Left ventricle myocardium superior (tissue), 1 donor: ENCODE measurements at regions of chr21 and their contacts with region 1.

Region 1: DNA sequence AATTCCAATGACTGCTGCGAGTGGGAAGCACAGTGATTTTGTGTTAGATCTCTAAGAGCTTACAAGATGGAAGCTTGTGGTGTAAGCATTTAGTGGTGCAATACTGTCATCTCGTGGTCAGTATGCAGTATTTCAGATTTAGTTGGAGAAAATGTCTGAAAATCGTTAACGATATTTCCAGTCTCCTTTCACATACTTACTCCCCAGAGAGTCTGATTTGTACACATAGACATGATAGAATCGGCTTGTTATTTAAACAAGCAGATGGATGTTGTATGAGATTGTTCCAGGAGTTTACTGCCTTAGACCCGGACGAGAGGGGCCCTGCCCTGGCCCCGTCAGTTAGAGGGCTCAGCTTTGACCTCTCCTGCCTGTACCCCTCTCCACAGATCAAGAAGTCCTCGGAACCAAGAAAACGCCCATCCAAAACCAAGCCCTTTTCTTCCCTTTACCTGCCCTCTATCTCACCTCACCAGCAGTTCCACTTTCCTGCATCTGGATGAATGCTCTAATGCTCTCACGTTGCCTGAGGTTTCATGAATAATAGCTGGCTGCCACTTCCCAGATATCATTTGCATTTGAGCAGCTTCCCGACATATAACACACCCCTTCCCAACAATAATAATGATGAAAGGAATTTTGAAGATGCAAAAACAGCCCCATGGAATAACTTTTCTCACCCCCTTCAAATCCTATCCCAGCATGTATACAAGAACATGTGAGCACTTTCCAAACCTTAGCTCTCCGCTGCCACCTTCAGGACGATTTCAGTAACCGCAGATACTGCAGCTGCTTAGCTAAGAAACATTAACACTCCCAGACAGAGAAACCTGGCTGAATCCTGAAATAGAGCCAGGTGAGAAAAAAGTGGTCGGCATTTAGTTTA is 247.3 kb downstream of the LTN1 start:
- DNase-seq: peak; percentile 59
- ATAC-seq: peak; percentile 91

Region 2: DNA sequence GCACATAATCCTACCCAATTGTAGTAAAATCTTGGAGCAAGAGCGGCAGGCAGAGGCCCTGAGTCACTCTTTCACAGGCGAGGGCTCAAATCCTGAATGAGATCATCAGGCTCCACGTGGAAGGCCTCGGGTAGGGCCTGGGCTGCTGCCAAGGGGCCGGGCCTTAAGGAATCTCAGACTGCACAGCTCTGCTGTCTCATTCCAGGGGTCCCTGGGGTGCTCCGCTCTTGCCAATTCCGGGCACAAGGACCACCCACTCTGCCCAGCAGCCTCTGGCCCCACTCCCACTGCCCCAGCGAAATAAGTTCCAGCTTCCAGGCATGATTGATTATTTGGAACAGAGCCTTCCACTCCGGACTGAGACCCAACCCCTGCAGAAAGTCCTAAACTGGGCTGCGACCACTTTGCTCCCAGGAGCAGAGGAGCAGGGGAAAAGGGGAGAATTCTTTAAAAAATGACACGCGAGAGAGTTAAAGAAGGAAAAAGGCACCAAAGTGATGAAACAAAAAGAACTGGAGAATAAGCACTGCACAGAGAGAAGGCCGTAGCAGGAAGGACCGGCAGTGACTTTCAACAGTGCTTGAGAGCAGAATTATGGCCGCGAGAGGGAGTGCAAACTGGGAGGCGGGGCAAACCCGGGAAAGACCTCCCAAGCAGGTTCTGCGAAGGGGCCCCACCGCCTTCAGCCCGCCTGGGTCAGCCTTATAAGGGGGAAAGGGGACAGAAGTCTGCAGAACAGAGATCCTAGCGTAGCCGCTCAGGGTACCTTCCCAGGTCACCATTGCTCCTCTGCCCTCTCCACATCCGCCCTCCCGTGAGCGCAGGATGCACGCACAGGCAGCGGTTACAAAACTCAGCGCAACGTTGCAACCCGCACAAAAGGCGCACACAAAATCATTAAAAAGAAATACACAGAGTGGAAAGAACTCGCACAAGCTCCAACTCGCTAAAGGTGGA is 1902.1 kb before region 1 on chr21:
- intact Hi-C with region 1: loop called (anchors 5 kb)
- DNase-seq: peak; percentile 96
- ATAC-seq: peak; percentile 59

Region 3: DNA sequence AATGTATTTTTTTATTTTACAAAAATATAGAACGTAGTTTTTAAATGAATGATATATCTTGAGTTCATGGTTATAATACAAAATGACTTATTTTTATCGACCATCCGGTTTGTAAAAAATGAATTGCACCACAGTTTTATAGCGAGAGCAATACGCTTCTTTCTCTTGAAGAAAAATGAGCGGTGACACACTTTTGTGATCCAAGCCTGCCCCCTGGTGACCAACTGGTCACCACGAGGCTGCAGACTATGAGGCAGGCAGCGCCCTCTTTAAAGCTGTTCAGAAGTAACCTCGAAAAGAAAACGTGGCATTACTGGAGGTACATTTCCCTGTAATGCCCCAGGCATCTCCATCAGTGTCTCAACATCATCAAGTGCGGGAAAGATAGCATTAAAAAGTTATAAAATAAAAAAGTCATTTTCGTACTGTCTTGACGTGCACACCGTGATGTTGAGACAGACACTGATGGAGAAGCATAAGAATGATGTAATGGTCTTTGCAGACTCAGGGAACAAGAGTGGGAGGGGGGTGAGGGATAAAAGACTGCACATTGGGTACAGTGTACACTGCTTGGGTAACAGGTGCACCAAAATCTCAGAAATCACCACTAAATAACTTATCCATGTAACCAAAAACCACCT is 1044.3 kb before region 1 on chr21:
- intact Hi-C with region 1: loop called (anchors 5 kb)
- DNase-seq: peak; percentile 87
- ATAC-seq: peak; percentile 92

Region 4: DNA sequence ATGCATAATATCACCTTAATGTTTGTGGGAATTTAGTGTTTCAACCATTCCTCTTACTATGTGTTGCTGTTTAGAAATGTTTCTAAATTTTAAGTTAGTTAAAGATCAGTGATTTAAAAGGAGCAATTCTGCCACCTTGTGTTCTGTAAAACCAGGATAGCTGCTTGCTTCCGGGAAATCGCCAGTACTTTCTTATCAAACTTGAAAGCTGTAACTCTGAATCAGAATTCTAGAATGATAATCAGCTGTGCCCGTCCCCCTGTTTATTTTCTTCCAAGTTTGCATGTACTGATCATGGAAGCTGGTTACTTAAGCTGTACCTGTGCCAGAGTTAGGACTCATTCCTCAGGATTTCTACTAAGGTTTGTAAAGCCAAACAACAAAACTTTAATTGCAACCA is 409.1 kb before region 1 on chr21:
- intact Hi-C with region 1: loop called (anchors 5 kb)
- DNase-seq: no peak
- ATAC-seq: peak; percentile 58

Region 5: DNA sequence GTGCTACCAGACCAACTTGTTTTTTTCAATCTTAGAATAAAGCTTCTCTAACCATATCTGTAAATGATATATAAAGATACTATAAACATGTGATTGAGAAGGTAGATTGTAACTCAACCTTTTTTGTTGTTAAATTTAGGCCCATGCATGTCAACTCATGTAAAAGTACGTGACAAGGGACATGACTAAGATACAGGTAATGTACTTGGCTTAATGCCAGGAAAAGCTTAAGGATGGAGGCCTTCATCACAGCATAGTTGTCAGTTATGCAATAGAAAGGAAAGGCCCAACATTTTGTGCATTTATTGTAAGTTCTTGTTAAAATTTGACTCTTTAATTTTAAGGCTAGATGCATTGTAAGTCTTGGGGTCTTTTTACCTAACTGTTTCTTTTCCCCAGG is 57.8 kb before region 1 on chr21:
- intact Hi-C with region 1: no loop called
- DNase-seq: no peak
- ATAC-seq: no peak

Region 6: DNA sequence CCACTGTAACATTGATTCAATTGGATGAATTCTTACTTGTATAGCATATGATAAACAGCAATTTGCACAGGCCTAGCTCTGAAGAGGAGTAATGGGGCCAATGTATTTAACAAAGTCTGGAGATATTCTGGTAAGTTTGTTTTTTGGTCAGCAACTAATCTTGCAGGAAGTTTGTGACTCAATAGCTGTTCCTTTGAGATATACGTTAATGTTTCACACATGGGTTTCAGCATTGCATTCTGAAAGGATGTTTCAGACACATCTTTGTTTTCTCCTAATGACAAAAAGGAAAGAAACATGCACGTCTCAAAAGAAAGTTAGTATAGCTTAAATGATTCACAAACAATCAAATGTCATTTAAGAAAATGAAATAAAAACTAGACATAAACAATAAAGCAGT is 198.3 kb after region 1 on chr21:
- intact Hi-C with region 1: loop called (anchors 5 kb)
- DNase-seq: no peak
- ATAC-seq: no peak